ENCODE measurements at regions of chr14 and their contacts with region 1.

Region 1: DNA sequence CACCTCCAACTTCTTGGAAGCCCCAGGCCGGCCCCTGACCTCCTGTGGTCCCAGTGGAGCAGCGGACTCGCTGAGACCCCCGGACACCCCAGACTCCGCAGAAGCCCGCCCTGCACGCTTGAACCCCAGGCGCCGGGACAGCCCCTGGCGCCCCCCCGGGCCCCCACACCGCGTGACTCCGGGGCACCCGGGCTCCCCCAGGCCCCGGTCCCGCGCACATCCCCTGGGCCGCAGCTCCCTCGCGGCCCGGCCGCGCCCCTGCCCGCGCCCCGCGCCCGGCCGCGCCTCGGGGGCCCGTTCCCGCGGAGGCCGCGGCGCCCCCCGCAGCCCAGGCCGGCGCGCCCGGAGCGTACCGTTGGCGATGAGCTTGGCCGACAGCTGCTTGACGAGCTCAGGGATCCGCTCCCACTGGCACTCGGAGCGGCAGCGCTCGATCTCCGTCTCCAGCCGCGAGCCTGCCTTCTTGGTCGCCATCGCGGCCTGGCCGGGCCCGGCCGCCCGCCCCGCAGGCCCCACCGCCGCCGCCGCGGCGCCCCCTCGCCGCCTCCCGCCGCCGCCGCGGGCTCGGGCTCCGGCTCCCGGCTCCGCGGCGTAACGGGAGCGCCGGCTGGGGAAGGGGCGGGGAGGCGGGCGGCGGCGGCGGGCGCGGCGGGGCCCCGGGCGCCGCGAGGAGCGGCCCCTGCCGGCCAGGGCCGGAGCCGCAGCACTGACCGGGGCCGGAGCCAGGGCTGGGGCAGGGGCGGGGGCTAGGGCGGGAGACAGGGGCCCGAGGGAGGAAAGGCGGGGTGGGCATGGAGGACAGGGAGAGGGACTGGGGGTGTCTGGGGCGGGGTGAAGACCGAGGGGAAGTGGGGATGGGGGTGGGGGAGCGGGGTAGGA is at the start of gene TTC7B:
- DNase-seq: peak in 1 of 2 donors; percentile 86
- ATAC-seq: peak; percentile 82
- H3K4me3 ChIP-seq: peak within 1 kb of the TSS; percentile 91 to 97
- H3K27ac ChIP-seq: no peak within 1 kb of the TSS
- H3K4me1 ChIP-seq: no peaks in the 10 kb centered on the region
- H3K27me3 ChIP-seq: no peaks in the 10 kb centered on the region
- total RNA-seq, gene TTC7B: 52.0 to 57.4 TPM

Region 2: GRCh38 chr14:90758028-90758889 is 57.8 kb before region 1 on chr14:
- intact Hi-C with region 1: loop called in 1 of 2 experiments (anchors 5 kb)
- DNase-seq: peak; percentile 94 to 98
- ATAC-seq: peak; percentile 95
- H3K4me3 ChIP-seq: peak overlapping the region in 1 of 2 donors; percentile 56
- H3K27ac ChIP-seq: peak overlapping the region; percentile 89 to 92
- H3K4me1 ChIP-seq: peaks cover 1 to 4% of the 10 kb centered on the region in 2 donors
- H3K27me3 ChIP-seq: no peaks in the 10 kb centered on the region

Measured in aorta (tissue), 5 donors.